Naive thymus-derived CD4-positive, alpha-beta T cell (primary cell): ENCODE measurements at regions of chr11 and their contacts with region 1.

Region 1: GRCh38 chr11:64152841-64153691 is 12.8 kb downstream of the MACROD1 start:
- DNase-seq: peak; percentile 40 to 84 (median 62)
- ATAC-seq: peak; percentile 95
- H3K4me3 ChIP-seq: no peak overlapping the region
- H3K4me3 Mint-ChIP-seq: no peak overlapping the region
- H3K27ac ChIP-seq: no peak overlapping the region
- H3K27ac Mint-ChIP-seq: no peak overlapping the region
- H3K4me1 ChIP-seq: no peaks in the 10 kb centered on the region
- H3K4me1 Mint-ChIP-seq: peaks cover 0 to 11% (median 3%) of the 10 kb centered on the region in 7 donors
- H3K27me3 ChIP-seq: no peaks in the 10 kb centered on the region
- H3K27me3 Mint-ChIP-seq: peaks cover 0 to 5% (median 0%) of the 10 kb centered on the region in 5 donors

Region 2: GRCh38 chr11:63032457-63032856 is 1120.6 kb before region 1 on chr11:
- CTCF ChIA-PET with region 1: no interaction called
- POLR2A ChIA-PET with region 1: no interaction called
- intact Hi-C with region 1: loop called in 1 of 2 experiments (anchors 10 kb)
- DNase-seq: no peak
- ATAC-seq: no peak
- H3K4me3 ChIP-seq: no peak overlapping the region
- H3K4me3 Mint-ChIP-seq: no peak overlapping the region
- H3K27ac ChIP-seq: no peak overlapping the region
- H3K27ac Mint-ChIP-seq: no peak overlapping the region
- H3K4me1 ChIP-seq: no peaks in the 10 kb centered on the region
- H3K4me1 Mint-ChIP-seq: peaks cover 0 to 6% (median 0%) of the 10 kb centered on the region in 7 donors
- H3K27me3 ChIP-seq: no peaks in the 10 kb centered on the region
- H3K27me3 Mint-ChIP-seq: peaks cover 15 to 27% (median 21%) of the 10 kb centered on the region in 5 donors

Region 3: GRCh38 chr11:63567044-63567840 is 585.8 kb before region 1 on chr11:
- CTCF ChIA-PET with region 1: no interaction called
- POLR2A ChIA-PET with region 1: no interaction called
- intact Hi-C with region 1: no loop called
- DNase-seq: peak in 8 of 9 donors; percentile 31 to 84 (median 62)
- ATAC-seq: peak; percentile 88
- H3K4me3 ChIP-seq: no peak overlapping the region
- H3K4me3 Mint-ChIP-seq: peak overlapping the region in 9 of 10 donors; percentile 7 to 62 (median 42)
- H3K27ac ChIP-seq: peak overlapping the region; percentile 44
- H3K27ac Mint-ChIP-seq: peak overlapping the region; percentile 56 to 94 (median 86)
- H3K4me1 ChIP-seq: peaks cover 22 to 25% of the 10 kb centered on the region in 2 donors
- H3K4me1 Mint-ChIP-seq: peaks cover 26 to 55% (median 47%) of the 10 kb centered on the region in 7 donors
- H3K27me3 ChIP-seq: no peaks in the 10 kb centered on the region
- H3K27me3 Mint-ChIP-seq: peaks cover 0 to 19% (median 0%) of the 10 kb centered on the region in 5 donors

Region 4: DNA sequence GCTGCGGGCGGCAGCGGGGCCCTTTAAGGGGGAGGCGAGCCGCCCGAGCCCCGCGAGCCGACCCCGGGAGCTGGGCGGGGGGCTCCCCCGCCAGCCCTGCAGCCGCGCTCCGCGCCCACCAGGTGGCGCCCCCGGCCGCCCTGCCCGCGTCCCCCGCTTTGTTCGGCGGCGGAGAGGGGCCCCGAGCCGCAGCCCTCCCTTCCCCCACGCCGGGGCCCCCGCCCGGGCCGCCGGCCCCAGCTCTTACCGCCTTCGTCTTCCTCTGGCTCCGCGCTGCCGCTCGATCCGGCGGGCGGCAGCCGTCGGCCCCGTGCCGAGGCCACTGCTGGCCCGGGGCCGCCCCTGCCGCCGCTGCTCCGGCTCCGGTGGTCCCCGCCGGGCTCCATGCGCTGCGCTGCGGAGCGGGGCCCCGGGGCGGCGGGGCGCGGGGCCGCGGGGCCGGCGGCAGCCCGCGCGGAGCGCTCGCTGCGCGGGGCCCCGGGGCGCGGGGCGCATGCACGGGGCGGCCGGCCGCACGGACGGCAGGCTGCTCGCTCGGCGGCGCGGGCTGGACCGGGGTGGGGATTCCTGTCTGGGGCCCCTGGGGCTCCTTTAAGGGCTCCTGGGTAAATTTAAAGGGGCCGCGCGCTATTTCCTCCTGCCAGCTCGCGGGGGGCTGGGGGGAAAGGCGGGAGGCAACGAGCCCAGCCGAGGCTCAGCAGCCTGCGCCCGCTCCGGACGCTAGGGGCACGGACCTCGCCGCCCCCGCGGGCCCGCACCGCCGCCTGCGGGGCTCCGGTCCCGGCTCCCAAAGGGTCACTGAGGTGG is 384.6 kb before region 1 on chr11 and contains the start of gene ZFTA:
- CTCF ChIA-PET with region 1: interaction called, 6 read pairs
- POLR2A ChIA-PET with region 1: no interaction called
- intact Hi-C with region 1: loop called (anchors 1 to 2 kb)
- DNase-seq: peak; percentile 34 to 79 (median 54)
- ATAC-seq: peak; percentile 84
- H3K4me3 ChIP-seq: peak within 1 kb of the TSS; percentile 77
- H3K4me3 Mint-ChIP-seq: peak within 1 kb of the TSS; percentile 87 to 99 (median 92)
- H3K27ac ChIP-seq: peak within 1 kb of the TSS; percentile 60
- H3K27ac Mint-ChIP-seq: peak within 1 kb of the TSS; percentile 34 to 94 (median 83)
- H3K4me1 ChIP-seq: peaks cover 6 to 9% of the 10 kb centered on the region in 2 donors
- H3K4me1 Mint-ChIP-seq: peaks cover 6 to 14% (median 8%) of the 10 kb centered on the region in 7 donors
- H3K27me3 ChIP-seq: peaks cover 0 to 9% of the 10 kb centered on the region in 2 donors
- H3K27me3 Mint-ChIP-seq: peaks cover 0 to 35% (median 9%) of the 10 kb centered on the region in 5 donors
- total RNA-seq, gene ZFTA: 2.1 to 3.6 (median 2.7) TPM

Region 5: GRCh38 chr11:63906585-63906984 is 246.5 kb before region 1 on chr11:
- CTCF ChIA-PET with region 1: interaction called, 4 read pairs
- POLR2A ChIA-PET with region 1: no interaction called
- intact Hi-C with region 1: loop called in 1 of 2 experiments (anchors 5 kb)
- DNase-seq: peak in 7 of 9 donors; percentile 38 to 65 (median 60)
- ATAC-seq: peak; percentile 70
- H3K4me3 ChIP-seq: no peak overlapping the region
- H3K4me3 Mint-ChIP-seq: no peak overlapping the region
- H3K27ac ChIP-seq: no peak overlapping the region
- H3K27ac Mint-ChIP-seq: peak overlapping the region in 4 of 9 donors; percentile 17 to 80 (median 61)
- H3K4me1 ChIP-seq: no peaks in the 10 kb centered on the region
- H3K4me1 Mint-ChIP-seq: peaks cover 0 to 6% (median 3%) of the 10 kb centered on the region in 7 donors
- H3K27me3 ChIP-seq: no peaks in the 10 kb centered on the region
- H3K27me3 Mint-ChIP-seq: no peaks in the 10 kb centered on the region

Region 6: GRCh38 chr11:64000026-64000739 is 152.9 kb before region 1 on chr11:
- CTCF ChIA-PET with region 1: interaction called, 25 read pairs
- POLR2A ChIA-PET with region 1: no interaction called
- intact Hi-C with region 1: loop called (anchors 1 kb)
- DNase-seq: peak; percentile 59 to 82 (median 75)
- ATAC-seq: peak; percentile 88
- H3K4me3 ChIP-seq: peak overlapping the region; percentile 41
- H3K4me3 Mint-ChIP-seq: peak overlapping the region in 7 of 10 donors; percentile 14 to 76 (median 45)
- H3K27ac ChIP-seq: peak overlapping the region; percentile 16
- H3K27ac Mint-ChIP-seq: no peak overlapping the region
- H3K4me1 ChIP-seq: peaks cover 8 to 15% of the 10 kb centered on the region in 2 donors
- H3K4me1 Mint-ChIP-seq: peaks cover 0 to 16% (median 9%) of the 10 kb centered on the region in 7 donors
- H3K27me3 ChIP-seq: no peaks in the 10 kb centered on the region
- H3K27me3 Mint-ChIP-seq: peaks cover 0 to 3% (median 0%) of the 10 kb centered on the region in 5 donors

Region 7: GRCh38 chr11:64110465-64111375 is 42.3 kb before region 1 on chr11:
- CTCF ChIA-PET with region 1: no interaction called
- POLR2A ChIA-PET with region 1: no interaction called
- intact Hi-C with region 1: no loop called
- DNase-seq: no peak
- ATAC-seq: no peak
- H3K4me3 ChIP-seq: no peak overlapping the region
- H3K4me3 Mint-ChIP-seq: no peak overlapping the region
- H3K27ac ChIP-seq: no peak overlapping the region
- H3K27ac Mint-ChIP-seq: no peak overlapping the region
- H3K4me1 ChIP-seq: no peaks in the 10 kb centered on the region
- H3K4me1 Mint-ChIP-seq: no peaks in the 10 kb centered on the region
- H3K27me3 ChIP-seq: no peaks in the 10 kb centered on the region
- H3K27me3 Mint-ChIP-seq: no peaks in the 10 kb centered on the region